Left colon (tissue), 2 donors: ENCODE measurements at regions of chr7 and their contacts with region 1.

Region 1: DNA sequence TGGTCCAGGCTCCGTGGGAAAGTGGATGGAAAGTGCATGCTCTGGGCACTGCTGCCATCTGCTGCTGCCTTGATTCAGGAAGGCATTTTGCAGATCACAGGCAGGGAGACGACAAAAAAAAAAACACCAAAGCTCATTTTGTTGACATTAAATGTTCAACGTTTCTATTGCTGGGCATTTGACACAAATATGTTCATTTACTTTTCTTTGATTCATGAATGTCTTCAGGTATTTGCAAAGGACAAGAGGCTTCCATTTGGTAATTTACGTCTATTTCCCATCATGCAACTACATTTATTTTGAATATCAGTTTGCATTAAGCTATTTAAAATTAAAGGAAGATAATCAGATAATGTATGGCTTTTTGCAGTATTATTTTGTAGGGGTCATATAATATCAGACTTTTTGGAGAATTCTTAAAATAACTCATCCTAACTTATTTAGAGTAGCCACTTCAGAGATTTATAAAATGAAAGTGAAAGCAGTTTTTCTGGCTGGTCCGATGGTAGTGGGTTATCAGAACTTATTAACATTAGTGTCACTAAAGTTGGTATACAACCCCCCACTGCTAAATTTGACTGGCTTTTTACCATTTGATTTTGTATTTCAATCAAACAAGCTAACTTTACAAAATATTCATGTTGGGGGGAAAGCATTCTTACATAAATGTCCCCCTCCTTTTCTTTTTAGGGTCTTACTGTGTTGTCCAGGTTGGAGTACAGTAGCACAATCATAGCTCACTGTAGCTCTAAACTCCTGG is 65.3 kb downstream of the PDIA4 start:
- DNase-seq: peak; percentile 67 to 72
- ATAC-seq: peak; percentile 78

Region 2: GRCh38 chr7:148503875-148504487 is 459.0 kb before region 1 on chr7:
- intact Hi-C with region 1: loop called in 1 of 2 experiments (anchors 10 kb)
- DNase-seq: no peak
- ATAC-seq: no peak

Region 3: GRCh38 chr7:148575640-148576411 is 387.2 kb before region 1 on chr7:
- intact Hi-C with region 1: loop called (anchors 5 to 10 kb)
- DNase-seq: peak in 1 of 2 donors; percentile 80
- ATAC-seq: peak; percentile 84

Region 4: GRCh38 chr7:148819697-148820360 is 143.2 kb before region 1 on chr7:
- intact Hi-C with region 1: no loop called
- DNase-seq: no peak
- ATAC-seq: no peak

Region 5: DNA sequence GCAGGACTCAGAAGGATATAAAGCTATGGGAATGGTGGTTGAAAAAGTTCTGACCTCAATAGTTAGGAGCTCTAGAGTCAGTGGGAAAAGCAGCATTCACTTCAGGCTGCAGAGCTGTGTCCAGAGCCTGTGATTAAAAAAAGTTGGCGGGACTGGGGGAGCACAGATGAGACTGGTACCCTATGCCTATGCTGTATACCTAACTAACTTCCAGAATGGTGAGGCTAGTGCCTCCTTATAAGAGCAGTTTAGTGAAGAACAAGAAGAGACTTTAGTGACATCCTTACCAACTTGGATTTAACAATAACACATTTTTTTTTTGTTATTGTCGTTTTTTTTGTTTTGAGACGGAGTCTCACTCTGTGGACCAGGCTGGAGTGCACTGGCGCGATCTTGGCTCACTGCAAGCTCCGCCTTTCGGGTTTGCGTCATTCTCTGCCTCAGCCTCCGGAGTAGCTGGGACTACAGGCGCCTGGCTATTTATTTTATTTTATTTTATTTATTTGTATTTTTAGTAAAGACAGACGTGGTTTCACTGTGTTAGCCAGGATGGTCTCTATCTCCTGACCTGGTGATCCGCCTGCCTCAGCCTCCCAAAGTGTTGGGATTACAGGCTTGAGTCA is 225.7 kb after region 1 on chr7:
- intact Hi-C with region 1: no loop called
- DNase-seq: no peak
- ATAC-seq: no peak

Region 6: GRCh38 chr7:149239345-149240191 is 276.6 kb after region 1 on chr7 and contains the start of gene ZNF212:
- intact Hi-C with region 1: no loop called
- DNase-seq: peak; percentile 88 to 90
- ATAC-seq: peak; percentile 100
- total RNA-seq, gene ZNF212: 9.3 to 9.7 TPM

Region 7: GRCh38 chr7:149559711-149560110 is 596.7 kb after region 1 on chr7:
- intact Hi-C with region 1: no loop called
- DNase-seq: no peak
- ATAC-seq: peak; percentile 18